ENCODE measurements at regions of chr3 and their contacts with region 1.

Region 1: DNA sequence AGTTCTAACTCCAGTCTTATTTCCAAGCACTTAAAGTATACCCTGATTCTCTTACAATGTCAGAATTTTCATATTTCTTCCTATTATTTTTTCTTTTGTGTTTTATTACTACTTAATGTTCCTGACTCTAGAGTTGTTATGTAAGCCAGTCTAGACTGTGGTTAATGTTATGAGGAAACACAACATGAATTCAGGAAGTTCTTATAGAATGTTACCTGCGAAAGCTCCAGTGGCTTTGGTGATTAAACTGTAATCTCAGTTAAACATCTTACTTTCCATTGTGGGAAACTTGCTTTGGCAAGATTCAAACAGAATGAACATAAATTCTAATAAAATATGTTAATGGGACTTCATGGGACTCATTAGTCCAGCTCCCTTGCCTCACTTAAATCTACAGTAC is 36.6 kb upstream of the CHL1 start:
- DNase-seq: no peak
- H3K4me3 ChIP-seq: no peak overlapping the region
- H3K27ac ChIP-seq: no peak overlapping the region
- H3K4me1 ChIP-seq: no peaks in the 10 kb centered on the region
- H3K27me3 ChIP-seq: no peaks in the 10 kb centered on the region
- CTCF ChIP-seq: no peak

Region 2: DNA sequence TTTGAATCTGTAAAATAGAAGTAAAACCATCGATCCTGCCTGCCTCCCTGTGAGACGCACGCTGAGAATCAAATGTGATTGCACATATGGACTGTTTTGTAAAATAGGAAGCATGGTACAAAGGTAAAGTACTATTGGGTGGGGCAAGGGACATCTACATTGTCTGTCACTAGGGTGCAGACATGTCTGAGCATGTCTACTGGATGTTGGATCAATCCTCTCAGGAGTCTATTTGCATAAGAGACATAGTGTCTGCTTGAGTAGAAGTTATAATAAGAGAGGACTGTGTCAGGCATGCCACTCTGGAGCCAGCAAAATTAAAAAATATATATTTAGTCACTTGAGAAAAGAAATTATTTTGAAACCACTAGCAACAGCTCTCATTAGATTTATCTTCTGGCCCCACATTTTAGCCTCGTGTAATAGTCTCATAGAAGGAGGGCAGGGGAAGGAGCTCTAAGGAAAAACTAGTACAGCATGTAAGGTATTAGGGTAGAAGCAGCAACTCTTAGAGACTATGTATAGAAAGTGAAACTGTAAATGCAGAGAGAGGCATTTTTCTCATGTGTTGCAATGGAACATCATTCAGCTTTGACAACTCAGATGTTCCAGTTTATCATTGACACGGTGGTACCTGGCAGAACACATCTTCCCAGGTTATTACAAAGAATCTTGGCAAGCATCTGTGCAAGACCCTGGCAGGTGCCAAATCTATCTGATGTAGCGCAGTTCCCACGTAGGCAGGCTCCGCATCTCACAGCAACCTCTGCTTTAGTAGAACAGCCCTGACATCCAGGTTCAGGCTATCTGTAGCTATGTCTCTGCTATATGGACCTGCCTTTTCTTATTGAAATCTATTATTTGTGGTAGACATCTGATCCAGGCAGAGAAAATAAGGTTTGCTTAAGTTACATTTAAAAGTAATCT is 48.6 kb before region 1 on chr3:
- CTCF ChIA-PET with region 1: no interaction called
- dilution Hi-C with region 1: no loop called
- in situ Hi-C with region 1: no loop called
- intact Hi-C with region 1: no loop called
- DNase-seq: peak; percentile 17
- H3K4me3 ChIP-seq: no peak overlapping the region
- H3K27ac ChIP-seq: no peak overlapping the region
- H3K4me1 ChIP-seq: peaks cover 4% of the 10 kb centered on the region
- H3K27me3 ChIP-seq: no peaks in the 10 kb centered on the region
- CTCF ChIP-seq: no peak

Region 3: DNA sequence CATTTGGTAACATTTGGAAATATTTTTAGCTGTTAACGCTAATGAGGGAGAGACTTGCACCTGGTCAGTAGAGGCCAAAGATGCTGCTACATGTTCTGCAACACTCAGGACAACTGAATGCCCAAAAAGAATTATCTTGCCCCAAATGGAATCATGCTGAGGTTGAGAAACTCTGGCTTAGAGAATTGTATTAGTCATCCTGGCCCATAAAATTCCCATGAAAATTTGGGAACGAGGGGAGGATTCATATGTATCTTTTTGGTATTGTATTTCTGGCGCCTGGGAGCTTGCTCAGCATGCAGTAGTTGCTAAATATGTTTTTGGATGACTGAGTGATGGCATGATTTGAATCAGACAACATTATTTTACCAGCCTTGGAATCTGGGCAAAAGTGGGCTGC is 96.5 kb after region 1 on chr3:
- CTCF ChIA-PET with region 1: no interaction called
- dilution Hi-C with region 1: loop called (anchors 5 kb)
- in situ Hi-C with region 1: no loop called
- intact Hi-C with region 1: no loop called
- DNase-seq: no peak
- H3K4me3 ChIP-seq: no peak overlapping the region
- H3K27ac ChIP-seq: no peak overlapping the region
- H3K4me1 ChIP-seq: no peaks in the 10 kb centered on the region
- H3K27me3 ChIP-seq: no peaks in the 10 kb centered on the region
- CTCF ChIP-seq: no peak

Region 4: GRCh38 chr3:299590-300301 is 139.8 kb after region 1 on chr3:
- CTCF ChIA-PET with region 1: no interaction called
- dilution Hi-C with region 1: no loop called
- in situ Hi-C with region 1: no loop called
- intact Hi-C with region 1: no loop called
- DNase-seq: no peak
- H3K4me3 ChIP-seq: no peak overlapping the region
- H3K27ac ChIP-seq: no peak overlapping the region
- H3K4me1 ChIP-seq: no peaks in the 10 kb centered on the region
- H3K27me3 ChIP-seq: no peaks in the 10 kb centered on the region
- CTCF ChIP-seq: no peak